Lower leg skin (tissue), 4 donors: ENCODE measurements at regions of chr16 and their contacts with region 1.

Region 1: GRCh38 chr16:2142942-2143877 is 5.2 kb upstream of the RAB26 start:
- DNase-seq: peak in 1 of 2 donors; percentile 81
- H3K4me3 ChIP-seq: no peak overlapping the region
- CTCF ChIP-seq: no peak
- POLR2A ChIP-seq: no peak

Region 2: GRCh38 chr16:2023098-2023925 is 119.9 kb before region 1 on chr16:
- intact Hi-C with region 1: loop called (anchors 5 kb)
- DNase-seq: peak; percentile 88 to 98
- H3K4me3 ChIP-seq: no peak overlapping the region
- CTCF ChIP-seq: peak in 1 of 3 donors; percentile 93
- POLR2A ChIP-seq: no peak